ENCODE measurements at regions of chr1 and their contacts with region 1.

Region 1: GRCh38 chr1:40668769-40669525 is 3.5 kb upstream of the RIMS3 start:
- DNase-seq: peak; percentile 85
- H3K4me3 ChIP-seq: peak overlapping the region; percentile 23 to 33; a peak in 2 of 4 replicates
- H3K27ac ChIP-seq: no peak overlapping the region
- H3K4me1 ChIP-seq: peaks cover 2 to 20% of the 10 kb centered on the region in 2 experiments; a peak in 1 of 4 replicates
- H3K27me3 ChIP-seq: no peaks in the 10 kb centered on the region
- CTCF ChIP-seq: peak; percentile 90
- EP300 ChIP-seq: no peak
- RAD21 ChIP-seq: peak; percentile 82

Region 2: DNA sequence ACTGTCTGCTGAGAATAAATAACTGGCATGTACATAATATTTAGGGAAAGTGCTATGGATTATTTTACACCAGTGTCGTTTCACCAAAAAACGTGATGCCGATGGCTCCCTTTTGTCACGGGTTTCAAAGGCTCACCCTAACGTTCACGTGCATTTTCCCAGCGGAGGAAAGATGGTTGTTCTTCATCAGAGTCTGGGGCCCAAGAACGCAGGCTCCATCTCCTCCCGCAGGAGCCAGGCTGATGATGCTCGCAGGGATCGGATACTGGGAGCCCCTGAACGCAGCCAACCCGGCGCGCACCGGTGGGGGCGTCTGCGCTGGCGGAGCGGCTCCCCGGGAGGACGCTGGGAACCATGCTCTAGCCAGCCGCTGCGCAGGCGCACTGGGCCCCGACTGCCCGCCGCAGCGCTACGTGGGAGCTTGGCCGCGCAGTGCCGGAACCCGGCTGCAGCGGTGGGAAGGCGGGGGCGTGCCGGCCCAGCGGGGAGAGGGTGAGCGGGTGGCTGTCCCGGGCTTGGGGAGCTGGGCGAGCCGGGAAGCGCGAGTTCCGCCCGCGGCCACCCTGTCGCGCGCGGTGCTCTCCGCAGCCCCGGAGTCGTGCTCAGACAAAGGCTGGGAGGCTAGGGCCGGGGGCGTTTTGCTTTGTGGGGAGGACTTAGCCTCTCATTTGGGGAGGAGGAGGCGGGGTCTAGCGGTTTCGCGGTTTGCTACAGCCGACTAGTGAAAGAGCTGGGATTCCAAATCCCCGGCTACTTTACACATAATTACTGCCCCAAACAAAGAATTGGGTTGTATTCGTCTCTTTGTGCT is 219.1 kb before region 1 on chr1 and contains the start of gene ZFP69B:
- CTCF ChIA-PET with region 1: no interaction called
- POLR2A ChIA-PET with region 1: no interaction called
- DNase-seq: peak; percentile 98
- H3K4me3 ChIP-seq: peak within 1 kb of the TSS; percentile 73 to 83
- H3K27ac ChIP-seq: peak within 1 kb of the TSS; percentile 79 to 97
- H3K4me1 ChIP-seq: peaks cover 0 to 2% of the 10 kb centered on the region in 2 experiments; a peak in 2 of 4 replicates
- H3K27me3 ChIP-seq: no peaks in the 10 kb centered on the region
- CTCF ChIP-seq: peak; percentile 14; the same call in 1 of the 2 replicates
- EP300 ChIP-seq: no peak
- RAD21 ChIP-seq: no peak
- polyA plus RNA-seq, gene ZFP69B: 1.7 and 2.1 TPM in 2 replicates

Region 3: DNA sequence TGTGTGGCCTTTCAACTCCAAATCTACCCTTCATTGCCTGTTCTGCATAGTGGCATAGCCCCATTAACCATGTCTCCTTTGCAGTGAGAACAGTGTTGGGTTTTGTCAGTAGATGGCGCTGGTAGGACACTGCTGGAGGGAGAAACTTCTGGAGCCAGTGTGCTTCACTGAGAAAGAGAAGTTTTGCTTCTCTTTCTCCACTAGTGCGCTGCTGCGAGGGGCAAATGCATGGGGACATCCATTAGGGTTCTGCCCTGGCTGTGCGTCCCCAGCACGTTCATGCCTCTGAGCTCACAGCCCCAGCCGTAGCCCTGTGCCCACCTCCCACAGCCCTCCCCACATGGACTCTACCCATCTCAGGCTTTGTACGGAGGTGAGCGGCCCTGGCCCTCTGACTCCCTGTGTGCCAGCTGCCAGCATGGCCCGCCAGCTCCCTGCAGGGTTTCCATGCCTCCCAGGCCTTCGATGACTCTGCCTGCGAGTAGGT is 56.6 kb before region 1 on chr1:
- CTCF ChIA-PET with region 1: interaction called, 20 read pairs
- POLR2A ChIA-PET with region 1: no interaction called
- DNase-seq: peak; percentile 78
- H3K4me3 ChIP-seq: peak overlapping the region in 1 of 2 experiments; percentile 47; a peak in 1 of 4 replicates
- H3K27ac ChIP-seq: no peak overlapping the region
- H3K4me1 ChIP-seq: peaks cover 0 to 4% of the 10 kb centered on the region in 2 experiments; a peak in 1 of 4 replicates
- H3K27me3 ChIP-seq: no peaks in the 10 kb centered on the region
- CTCF ChIP-seq: peak; percentile 86
- EP300 ChIP-seq: no peak
- RAD21 ChIP-seq: peak; percentile 96

Region 4: DNA sequence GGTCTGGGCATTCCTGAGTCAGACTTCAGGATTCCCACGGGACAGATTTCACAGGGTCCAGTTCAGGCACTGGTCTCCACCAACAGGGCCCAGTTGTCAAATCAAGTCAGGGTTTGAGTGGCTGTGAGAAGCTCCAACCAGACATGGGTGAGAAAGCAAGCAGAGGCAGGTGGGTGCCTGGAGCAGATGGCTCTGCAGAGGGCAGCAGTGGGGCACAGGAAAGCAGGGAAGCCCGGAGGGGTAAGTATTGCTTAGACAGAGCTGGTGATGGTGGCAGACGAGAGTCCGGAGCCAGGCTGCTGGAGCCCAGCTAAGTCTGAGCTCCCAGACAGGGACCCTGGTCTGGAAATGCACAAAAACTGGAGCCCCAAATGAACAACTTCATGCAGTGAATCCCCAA is 43.9 kb before region 1 on chr1:
- CTCF ChIA-PET with region 1: interaction called, 14 read pairs
- POLR2A ChIA-PET with region 1: no interaction called
- DNase-seq: no peak
- H3K4me3 ChIP-seq: no peak overlapping the region
- H3K27ac ChIP-seq: no peak overlapping the region
- H3K4me1 ChIP-seq: peaks cover 0 to 4% of the 10 kb centered on the region in 2 experiments; a peak in 1 of 4 replicates
- H3K27me3 ChIP-seq: no peaks in the 10 kb centered on the region
- CTCF ChIP-seq: peak; percentile 34; the same call in 1 of the 2 replicates
- EP300 ChIP-seq: no peak
- RAD21 ChIP-seq: peak; percentile 57

Region 5: DNA sequence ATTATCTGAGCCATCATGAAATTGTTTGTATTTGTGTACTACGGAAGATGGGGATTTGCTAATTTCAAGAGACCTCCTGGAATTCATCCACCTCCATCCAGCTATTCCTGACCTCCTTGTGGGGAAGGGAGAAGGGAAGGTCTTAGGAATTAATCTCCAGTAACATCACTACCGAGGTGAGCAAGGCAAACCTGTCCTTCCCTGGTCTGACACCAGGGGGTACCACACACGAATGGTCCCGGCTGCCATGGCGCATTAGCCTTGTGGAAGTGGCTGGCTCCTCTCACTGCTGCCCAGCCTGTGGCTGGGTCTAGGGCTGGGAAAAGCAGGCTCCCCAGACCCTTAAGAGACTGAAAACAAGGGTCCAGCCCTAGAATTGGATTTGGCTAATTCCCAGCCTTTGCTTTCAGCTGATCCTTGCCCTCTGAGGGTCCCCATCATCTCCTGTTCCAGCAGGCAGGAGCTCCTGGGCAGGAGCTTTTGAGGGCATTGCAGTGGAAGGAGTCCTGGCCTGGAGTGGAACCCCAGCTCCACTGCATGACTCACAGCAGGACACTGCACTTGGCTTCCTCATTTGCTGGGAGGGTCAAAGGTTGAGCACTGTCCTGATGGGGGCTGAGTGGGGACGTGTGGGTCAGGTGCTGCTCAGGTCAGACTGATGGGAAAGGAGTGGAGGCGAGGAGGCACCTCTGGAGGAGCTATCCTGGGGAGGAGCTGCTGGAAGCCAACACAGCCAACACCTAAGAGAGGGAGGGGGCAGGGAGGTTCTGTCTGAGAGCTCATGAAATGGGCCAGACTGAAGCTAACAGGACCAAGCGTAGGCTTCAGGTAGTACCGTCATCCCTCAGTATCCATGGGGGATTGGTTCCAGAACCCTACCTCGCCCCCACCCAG is 38.2 kb before region 1 on chr1:
- CTCF ChIA-PET with region 1: interaction called, 14 read pairs
- POLR2A ChIA-PET with region 1: no interaction called
- DNase-seq: peak; percentile 72
- H3K4me3 ChIP-seq: no peak overlapping the region; a peak in 1 of 4 replicates
- H3K27ac ChIP-seq: no peak overlapping the region
- H3K4me1 ChIP-seq: peaks cover 0 to 4% of the 10 kb centered on the region in 2 experiments; a peak in 1 of 4 replicates
- H3K27me3 ChIP-seq: no peaks in the 10 kb centered on the region
- CTCF ChIP-seq: peak; percentile 47; the same call in 1 of the 2 replicates
- EP300 ChIP-seq: no peak
- RAD21 ChIP-seq: peak; percentile 54

Region 6: GRCh38 chr1:40679165-40679953 is 10.4 kb after region 1 on chr1:
- CTCF ChIA-PET with region 1: interaction called, 26 read pairs
- POLR2A ChIA-PET with region 1: no interaction called
- DNase-seq: no peak
- H3K4me3 ChIP-seq: no peak overlapping the region
- H3K27ac ChIP-seq: no peak overlapping the region
- H3K4me1 ChIP-seq: no peaks in the 10 kb centered on the region
- H3K27me3 ChIP-seq: no peaks in the 10 kb centered on the region
- CTCF ChIP-seq: no peak
- EP300 ChIP-seq: no peak
- RAD21 ChIP-seq: no peak

Region 7: GRCh38 chr1:40684669-40685068 is 15.7 kb after region 1 on chr1:
- CTCF ChIA-PET with region 1: interaction called, 26 read pairs
- POLR2A ChIA-PET with region 1: interaction called, 4 read pairs
- DNase-seq: no peak
- H3K4me3 ChIP-seq: no peak overlapping the region
- H3K27ac ChIP-seq: no peak overlapping the region
- H3K4me1 ChIP-seq: peaks cover 0 to under 1% of the 10 kb centered on the region in 2 experiments; a peak in 1 of 4 replicates
- H3K27me3 ChIP-seq: no peaks in the 10 kb centered on the region
- CTCF ChIP-seq: no peak
- EP300 ChIP-seq: no peak
- RAD21 ChIP-seq: no peak

Region 8: GRCh38 chr1:40691538-40692428 is 22.8 kb after region 1 on chr1 and contains the start of gene NFYC:
- CTCF ChIA-PET with region 1: interaction called, 12 read pairs
- POLR2A ChIA-PET with region 1: interaction called, 30 read pairs
- DNase-seq: peak; percentile 96
- H3K4me3 ChIP-seq: peak within 1 kb of the TSS; percentile 68 to 95
- H3K27ac ChIP-seq: peak within 1 kb of the TSS; percentile 97 to 99
- H3K4me1 ChIP-seq: peaks cover 17 to 21% of the 10 kb centered on the region in 2 experiments; a peak in 3 of 4 replicates
- H3K27me3 ChIP-seq: no peaks in the 10 kb centered on the region
- CTCF ChIP-seq: no peak
- EP300 ChIP-seq: no peak; a peak in 1 of 4 replicates
- RAD21 ChIP-seq: no peak
- polyA plus RNA-seq, gene NFYC: 68.0 and 72.4 TPM in 2 replicates

Region 9: DNA sequence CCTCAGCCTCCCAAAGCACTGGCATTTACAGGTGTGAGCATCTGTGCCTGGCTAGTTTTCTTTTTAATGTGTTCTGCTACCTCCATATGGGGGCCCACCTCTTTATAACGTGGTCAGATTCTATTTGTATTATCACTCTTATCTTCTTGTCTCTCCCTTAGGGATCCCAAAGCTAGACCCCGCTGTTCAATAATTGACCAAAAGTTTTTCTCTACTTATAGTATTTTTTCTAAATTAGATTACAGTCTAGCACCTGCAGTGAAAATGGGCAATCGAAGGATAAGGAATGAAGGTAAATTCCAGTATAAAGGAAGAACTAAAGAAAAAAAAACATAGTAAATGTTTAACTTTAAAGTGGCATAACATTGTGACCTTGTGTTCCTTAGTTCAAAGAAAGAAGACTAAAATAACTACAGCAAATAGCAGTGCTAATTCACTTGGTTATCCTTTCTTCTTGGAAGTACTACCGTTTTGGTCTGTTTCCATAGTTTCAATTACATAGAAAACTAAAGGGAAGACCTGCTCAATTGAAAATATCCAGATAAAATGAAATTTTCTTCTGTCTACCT is 46.6 kb after region 1 on chr1:
- CTCF ChIA-PET with region 1: no interaction called
- POLR2A ChIA-PET with region 1: no interaction called
- DNase-seq: no peak
- H3K4me3 ChIP-seq: no peak overlapping the region
- H3K27ac ChIP-seq: no peak overlapping the region
- H3K4me1 ChIP-seq: peaks cover 9 to 20% of the 10 kb centered on the region in 2 experiments; a peak in 3 of 4 replicates
- H3K27me3 ChIP-seq: no peaks in the 10 kb centered on the region
- CTCF ChIP-seq: no peak
- EP300 ChIP-seq: no peak
- RAD21 ChIP-seq: no peak